Heart left ventricle (tissue), 16 donors: ENCODE measurements at regions of chr1 and their contacts with region 1.

Region 1: DNA sequence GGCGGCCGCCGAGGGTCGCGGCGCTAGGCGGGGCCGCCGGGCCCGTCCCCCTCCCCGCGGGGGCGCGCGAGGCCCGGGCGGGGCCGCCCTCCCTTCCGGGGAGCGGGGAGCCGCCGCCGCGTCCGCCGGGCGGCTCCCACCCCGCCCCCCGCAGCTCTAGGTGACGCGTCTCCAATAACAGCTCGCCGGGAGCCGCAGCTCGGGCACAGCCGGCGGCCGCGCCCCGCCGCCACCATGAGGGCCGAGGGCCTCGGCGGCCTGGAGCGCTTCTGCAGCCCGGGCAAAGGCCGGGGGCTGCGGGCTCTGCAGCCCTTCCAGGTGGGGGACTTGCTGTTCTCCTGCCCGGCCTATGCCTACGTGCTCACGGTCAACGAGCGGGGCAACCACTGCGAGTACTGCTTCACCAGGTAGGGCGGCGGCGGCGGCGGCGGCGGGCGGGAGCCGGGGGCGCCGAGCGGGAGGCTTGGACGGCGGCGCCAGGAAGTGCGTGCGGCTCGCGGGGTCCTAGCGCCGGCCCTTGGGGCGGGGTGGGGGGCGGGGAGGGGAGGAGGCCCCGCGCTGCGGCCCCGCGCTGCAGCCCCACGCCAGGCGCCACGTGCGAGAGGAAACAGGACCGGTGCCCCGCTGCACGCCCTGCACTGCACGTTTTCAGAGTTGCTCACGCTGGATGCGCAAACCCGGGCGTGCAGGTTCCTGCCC is at the start of gene SMYD2:
- DNase-seq: peak; percentile 80 to 90 (median 87)
- ATAC-seq: peak; percentile 16 to 84 (median 59)
- H3K4me3 ChIP-seq: peak within 1 kb of the TSS; percentile 58 to 98 (median 92)
- H3K27ac ChIP-seq: peak within 1 kb of the TSS; percentile 94 to 100 (median 98)
- H3K4me1 ChIP-seq: peaks cover 0 to 63% (median 34%) of the 10 kb centered on the region in 12 donors
- H3K27me3 ChIP-seq: no peaks in the 10 kb centered on the region
- CTCF ChIP-seq: no peak
- POLR2A ChIP-seq: peak; percentile 69 to 93
- total RNA-seq, gene SMYD2: 204 to 406 (median 342) TPM

Region 2: DNA sequence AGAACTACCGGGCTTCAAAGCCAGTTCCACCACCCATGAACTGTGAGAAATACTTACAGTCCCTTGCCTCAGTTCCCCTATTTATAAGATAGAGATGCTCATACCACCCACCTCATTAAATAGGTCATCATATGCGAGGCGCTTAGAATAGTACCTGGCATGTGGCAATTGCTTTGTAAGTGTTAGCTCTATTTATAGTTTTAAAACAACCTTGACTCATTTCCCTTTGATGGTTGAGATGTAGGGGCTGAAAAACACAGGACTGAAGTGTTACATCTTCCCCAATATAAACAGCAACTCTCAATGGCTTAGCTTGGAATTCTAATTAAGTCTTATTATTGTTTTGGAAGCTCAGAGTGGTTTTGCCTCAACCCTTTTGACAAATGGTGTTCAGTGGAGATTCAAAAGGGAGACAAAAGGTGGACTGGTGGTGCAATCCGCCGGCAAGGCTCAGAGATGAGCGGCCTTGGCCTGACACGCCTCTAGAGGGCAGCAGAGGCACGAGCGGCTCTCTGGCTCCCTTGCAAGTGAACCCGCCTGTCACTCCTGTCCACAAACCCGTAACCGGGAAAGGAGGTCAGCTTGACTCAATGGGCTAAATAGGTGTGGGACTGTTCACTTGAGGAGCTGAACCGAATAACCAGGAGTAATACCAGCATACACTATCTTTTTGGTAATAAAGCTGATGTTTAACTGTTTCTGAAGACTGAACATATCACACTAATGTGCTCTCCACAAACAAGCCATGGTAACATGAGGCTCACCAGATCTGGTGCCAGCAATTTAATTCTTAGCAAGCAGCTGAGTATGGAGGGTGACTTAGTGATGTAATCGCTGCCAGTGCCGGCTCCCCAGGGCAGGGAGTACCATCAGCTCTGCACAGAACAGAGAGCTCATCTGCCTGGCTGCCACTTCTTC is 19.7 kb before region 1 on chr1:
- intact Hi-C with region 1: loop called in 2 of 10 experiments (anchors 2 kb)
- DNase-seq: peak; percentile 85 to 91 (median 89)
- ATAC-seq: peak; percentile 95 to 98 (median 97)
- H3K4me3 ChIP-seq: no peak overlapping the region
- H3K27ac ChIP-seq: peak overlapping the region in 10 of 12 donors; percentile 40 to 86 (median 68)
- H3K4me1 ChIP-seq: peaks cover 0 to 20% (median 5%) of the 10 kb centered on the region in 12 donors
- H3K27me3 ChIP-seq: peaks cover 0 to 56% (median 6%) of the 10 kb centered on the region in 9 donors
- CTCF ChIP-seq: peak; percentile 93 to 99 (median 97)
- POLR2A ChIP-seq: no peak

Region 3: DNA sequence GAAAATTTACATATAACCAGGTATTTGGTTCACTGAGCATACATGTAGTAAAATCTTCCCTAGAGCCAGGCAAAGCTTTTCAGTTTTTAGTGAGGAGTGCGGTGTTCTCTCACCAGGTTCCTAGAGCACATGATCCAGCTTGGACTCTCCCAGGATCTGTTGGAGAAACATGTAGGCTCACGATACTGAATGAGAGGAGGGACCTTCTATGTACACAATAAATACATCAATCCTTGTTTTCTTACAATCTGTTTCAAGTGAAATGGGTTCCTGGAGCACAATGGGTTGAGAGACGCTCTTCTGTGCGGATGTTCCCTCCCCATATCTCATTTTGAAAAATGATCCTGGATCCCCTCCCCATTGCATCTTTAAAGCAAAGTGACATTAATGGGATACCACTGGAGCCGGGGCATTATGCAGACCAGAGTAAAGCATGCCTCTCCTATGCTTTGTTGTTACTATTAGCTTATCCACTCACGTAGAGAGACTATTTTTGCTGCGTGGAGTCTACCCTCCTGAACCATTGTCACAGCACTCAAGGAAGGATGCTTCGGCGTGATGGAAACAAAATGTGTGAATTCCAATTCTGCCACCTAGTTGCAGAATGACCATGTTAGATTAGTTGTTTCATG is 19.1 kb after region 1 on chr1:
- intact Hi-C with region 1: loop called in 1 of 10 experiments (anchors 2 kb)
- DNase-seq: no peak
- ATAC-seq: no peak
- H3K4me3 ChIP-seq: no peak overlapping the region
- H3K27ac ChIP-seq: no peak overlapping the region
- H3K4me1 ChIP-seq: peaks cover 0 to 63% (median 25%) of the 10 kb centered on the region in 12 donors
- H3K27me3 ChIP-seq: no peaks in the 10 kb centered on the region
- CTCF ChIP-seq: no peak
- POLR2A ChIP-seq: no peak

Region 4: GRCh38 chr1:214316593-214316992 is 35.4 kb after region 1 on chr1:
- intact Hi-C with region 1: loop called in 4 of 10 experiments (anchors 2 to 5 kb)
- DNase-seq: peak in 3 of 5 donors; percentile 51 to 62 (median 53)
- ATAC-seq: peak; percentile 53 to 86 (median 72)
- H3K4me3 ChIP-seq: no peak overlapping the region
- H3K27ac ChIP-seq: peak overlapping the region in 11 of 12 donors; percentile 70 to 93 (median 73)
- H3K4me1 ChIP-seq: peaks cover 0 to 79% (median 17%) of the 10 kb centered on the region in 12 donors
- H3K27me3 ChIP-seq: no peaks in the 10 kb centered on the region
- CTCF ChIP-seq: no peak
- POLR2A ChIP-seq: no peak